Dorsolateral prefrontal cortex (tissue), 120 donors: ENCODE measurements at regions of chr14 and their contacts with region 1.

Region 1: DNA sequence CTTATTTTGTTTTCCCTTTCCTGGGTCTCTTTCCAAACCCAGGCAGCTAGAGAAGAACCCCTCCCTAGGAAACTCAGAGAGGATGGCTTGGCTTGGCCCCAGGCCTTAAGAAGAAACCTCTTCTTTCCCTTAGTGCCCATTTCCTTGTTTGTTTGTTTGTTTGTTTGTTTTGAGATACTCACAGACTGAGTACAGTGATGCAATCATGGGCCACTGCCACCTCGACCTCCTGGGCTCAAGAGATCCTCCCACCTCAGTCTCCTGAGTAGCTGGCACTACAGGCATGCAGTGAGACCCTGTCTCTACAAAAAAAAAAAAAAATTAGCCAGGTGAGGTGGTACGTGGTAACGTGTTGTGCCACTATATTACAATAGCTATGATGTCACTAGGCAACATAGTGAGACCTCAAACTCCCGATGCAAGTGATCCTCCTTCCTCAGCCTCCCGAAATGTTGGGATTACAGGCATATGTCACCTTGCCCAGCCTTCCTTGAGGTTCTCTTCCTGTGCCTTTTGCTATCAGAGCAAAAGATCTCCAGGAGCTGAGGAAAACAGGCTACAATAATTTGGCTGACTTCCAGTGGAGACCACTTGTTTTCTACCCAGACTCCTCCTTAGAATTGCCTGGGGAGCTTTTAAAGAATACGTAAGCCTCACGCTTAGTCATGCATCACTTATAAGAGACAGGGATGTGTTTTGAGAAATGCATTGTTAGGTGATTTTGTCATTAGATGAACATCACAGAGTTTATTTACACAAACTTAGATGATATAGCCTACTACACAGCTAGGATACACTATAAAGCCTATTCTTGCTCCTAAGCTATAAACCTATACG is 34.5 kb upstream of the LGALS3 start:
- DNase-seq: no peak
- H3K4me3 ChIP-seq: no peak overlapping the region
- H3K27ac ChIP-seq: no peak overlapping the region
- H3K27me3 ChIP-seq: no peaks in the 10 kb centered on the region
- CTCF ChIP-seq: no peak

Region 2: GRCh38 chr14:55160989-55161388 is 66.5 kb after region 1 on chr14:
- intact Hi-C with region 1: loop called (anchors 1 to 5 kb)
- DNase-seq: no peak
- H3K4me3 ChIP-seq: no peak overlapping the region
- H3K27ac ChIP-seq: no peak overlapping the region
- H3K27me3 ChIP-seq: no peaks in the 10 kb centered on the region
- CTCF ChIP-seq: peak; percentile 38 to 87 (median 68)